CD8-positive, alpha-beta T cell (primary cell): ENCODE measurements at regions of chr2 and their contacts with region 1.

Region 1: DNA sequence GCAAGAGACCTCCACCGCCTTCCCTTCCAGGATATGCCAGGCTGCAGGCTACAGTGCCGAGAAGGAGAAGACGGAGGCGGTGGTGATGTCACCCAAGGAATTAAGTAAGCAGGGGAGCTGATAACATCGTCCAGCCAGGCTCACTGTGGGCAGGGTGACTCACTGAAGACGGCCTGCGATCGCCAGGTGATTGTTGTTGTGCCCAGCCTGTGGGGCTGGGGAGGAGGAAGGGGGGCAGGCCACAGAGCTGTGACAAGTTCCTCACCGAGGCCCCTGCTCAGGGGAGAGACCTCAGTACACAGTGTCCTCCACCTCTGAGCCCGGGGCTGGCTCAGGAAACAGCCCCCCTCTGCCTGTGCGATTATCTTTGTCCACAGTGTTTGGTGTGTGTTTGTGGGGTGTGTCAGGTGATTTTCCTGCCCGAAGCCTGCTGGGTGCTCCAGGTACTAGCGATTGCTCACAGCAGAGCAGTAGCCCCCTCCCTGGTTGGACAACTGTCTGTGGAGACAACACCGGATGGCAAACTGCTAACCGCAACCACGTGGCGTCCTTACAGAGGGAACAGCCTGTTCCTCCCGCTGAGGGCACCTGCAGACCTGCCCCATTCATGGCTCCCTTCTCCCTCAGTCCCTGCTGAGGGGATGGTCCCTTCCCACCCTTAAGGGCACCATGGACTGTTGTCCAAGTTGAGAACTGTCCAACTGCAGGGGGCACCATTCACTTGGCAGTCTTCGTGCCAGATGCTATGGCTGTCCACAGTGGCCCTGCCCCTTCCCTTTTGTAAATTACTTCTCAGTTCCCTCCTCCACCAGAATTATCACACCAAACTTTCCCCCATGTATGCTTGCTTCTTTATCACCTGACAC is 95.1 kb downstream of the ZFP36L2 start:
- DNase-seq: peak; percentile 64 to 95 (median 90)
- ATAC-seq: peak; percentile 51
- H3K4me3 ChIP-seq: peak overlapping the region; percentile 12 to 44
- H3K4me3 Mint-ChIP-seq: peak overlapping the region; percentile 60
- H3K27ac ChIP-seq: peak overlapping the region; percentile 88 to 90
- H3K27ac Mint-ChIP-seq: peak overlapping the region; percentile 100
- H3K4me1 ChIP-seq: peaks cover 97% of the 10 kb centered on the region
- H3K4me1 Mint-ChIP-seq: peaks cover 89% of the 10 kb centered on the region
- H3K27me3 ChIP-seq: no peaks in the 10 kb centered on the region
- H3K27me3 Mint-ChIP-seq: no peaks in the 10 kb centered on the region
- CTCF ChIP-seq: peak; percentile 21

Region 2: DNA sequence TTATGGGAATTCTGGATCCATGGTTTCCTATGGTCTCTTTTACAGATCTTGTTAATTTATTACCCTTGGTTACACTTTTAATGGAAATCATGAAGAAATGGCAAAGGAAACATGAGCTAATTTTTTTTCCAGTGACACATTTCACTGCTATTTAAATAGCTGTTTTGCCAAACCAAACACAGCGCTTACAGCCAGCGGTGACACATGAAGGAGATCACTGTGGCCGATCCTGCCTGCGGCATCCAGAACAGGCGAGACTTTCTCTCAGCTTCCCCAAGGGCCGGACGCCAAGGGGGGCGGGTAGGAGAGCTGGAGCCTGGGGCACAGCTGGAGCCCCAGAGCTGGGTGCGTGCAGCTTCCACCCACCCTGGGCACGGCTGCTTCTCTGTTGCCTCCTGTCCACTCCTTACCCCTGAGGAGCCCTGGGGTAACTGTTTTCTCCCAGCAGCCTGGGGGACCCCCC is 1164.8 kb before region 1 on chr2:
- CTCF ChIA-PET with region 1: no interaction called
- POLR2A ChIA-PET with region 1: no interaction called
- intact Hi-C with region 1: no loop called
- DNase-seq: no peak
- ATAC-seq: no peak
- H3K4me3 ChIP-seq: no peak overlapping the region
- H3K4me3 Mint-ChIP-seq: no peak overlapping the region
- H3K27ac ChIP-seq: no peak overlapping the region
- H3K27ac Mint-ChIP-seq: no peak overlapping the region
- H3K4me1 ChIP-seq: no peaks in the 10 kb centered on the region
- H3K4me1 Mint-ChIP-seq: no peaks in the 10 kb centered on the region
- H3K27me3 ChIP-seq: no peaks in the 10 kb centered on the region
- H3K27me3 Mint-ChIP-seq: no peaks in the 10 kb centered on the region
- CTCF ChIP-seq: no peak

Region 3: GRCh38 chr2:42828487-42829425 is 302.5 kb before region 1 on chr2:
- CTCF ChIA-PET with region 1: no interaction called
- POLR2A ChIA-PET with region 1: no interaction called
- intact Hi-C with region 1: loop called in 1 of 2 experiments (anchors 5 kb)
- DNase-seq: peak; percentile 34 to 84 (median 70)
- ATAC-seq: peak; percentile 97
- H3K4me3 ChIP-seq: no peak overlapping the region
- H3K4me3 Mint-ChIP-seq: no peak overlapping the region
- H3K27ac ChIP-seq: no peak overlapping the region
- H3K27ac Mint-ChIP-seq: no peak overlapping the region
- H3K4me1 ChIP-seq: peaks cover 9% of the 10 kb centered on the region
- H3K4me1 Mint-ChIP-seq: peaks cover 17% of the 10 kb centered on the region
- H3K27me3 ChIP-seq: peaks cover 0 to 2% of the 10 kb centered on the region in 2 experiments
- H3K27me3 Mint-ChIP-seq: peaks cover 1% of the 10 kb centered on the region
- CTCF ChIP-seq: peak; percentile 88

Region 4: DNA sequence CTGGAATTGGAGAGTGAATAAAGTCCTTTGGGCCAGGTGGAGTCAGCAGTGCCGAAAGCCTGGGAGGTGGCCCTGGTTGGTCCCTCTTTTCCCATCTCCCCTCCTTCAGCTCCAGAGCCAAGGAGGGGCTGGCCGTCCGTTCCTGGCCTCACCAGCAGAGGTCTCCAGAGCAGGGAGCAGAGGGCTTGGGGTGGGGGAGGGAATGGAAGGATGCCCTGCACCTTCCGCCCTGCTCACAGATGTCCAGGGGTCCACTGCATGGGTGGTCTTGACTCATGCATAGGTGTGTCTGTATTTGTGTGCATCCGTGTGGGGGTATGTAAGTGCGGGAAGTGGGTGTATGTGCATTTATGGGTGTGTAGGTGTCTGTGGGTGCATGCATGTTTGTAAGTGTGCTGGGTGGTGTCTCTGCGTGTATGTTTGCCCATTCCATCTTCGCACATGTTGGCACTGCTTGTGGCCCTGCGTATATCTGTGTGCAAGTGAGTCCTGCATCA is 106.7 kb before region 1 on chr2:
- CTCF ChIA-PET with region 1: interaction called, 8 read pairs
- POLR2A ChIA-PET with region 1: no interaction called
- intact Hi-C with region 1: loop called in 1 of 2 experiments (anchors 10 kb)
- DNase-seq: peak in 8 of 9 experiments; percentile 6 to 67 (median 38)
- ATAC-seq: peak; percentile 55
- H3K4me3 ChIP-seq: no peak overlapping the region
- H3K4me3 Mint-ChIP-seq: no peak overlapping the region
- H3K27ac ChIP-seq: no peak overlapping the region
- H3K27ac Mint-ChIP-seq: no peak overlapping the region
- H3K4me1 ChIP-seq: peaks cover 13% of the 10 kb centered on the region
- H3K4me1 Mint-ChIP-seq: peaks cover 24% of the 10 kb centered on the region
- H3K27me3 ChIP-seq: no peaks in the 10 kb centered on the region
- H3K27me3 Mint-ChIP-seq: no peaks in the 10 kb centered on the region
- CTCF ChIP-seq: no peak

Region 5: DNA sequence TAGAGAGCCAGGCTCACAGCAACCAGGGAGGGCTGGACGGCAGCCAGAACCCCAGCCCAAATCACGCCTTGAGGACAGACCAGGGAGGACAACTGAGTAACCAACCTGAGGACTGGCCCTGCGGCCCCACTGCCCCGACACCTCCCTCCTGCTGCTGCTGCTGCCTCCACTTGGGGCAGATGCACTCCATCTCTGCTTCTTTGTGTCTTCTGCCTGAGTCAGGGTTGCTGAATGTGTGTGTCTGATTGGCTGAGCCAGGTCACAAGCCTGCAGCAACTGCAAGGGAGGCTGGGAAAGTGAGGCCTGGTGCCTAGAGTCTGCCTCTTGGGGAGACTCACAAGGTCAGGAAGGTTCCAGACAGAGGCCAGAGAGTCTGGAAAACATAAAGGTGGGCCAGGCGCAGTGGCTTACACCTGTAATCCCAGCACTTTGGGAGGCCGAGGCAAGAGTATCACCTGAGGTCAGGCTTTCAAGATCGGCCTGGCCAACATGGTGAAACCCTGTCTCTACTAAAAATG is 11.7 kb after region 1 on chr2:
- CTCF ChIA-PET with region 1: interaction called, 16 read pairs
- POLR2A ChIA-PET with region 1: interaction called, 7 read pairs
- intact Hi-C with region 1: loop called in 1 of 2 experiments (anchors 2 kb)
- DNase-seq: peak in 7 of 9 experiments; percentile 24 to 74 (median 51)
- ATAC-seq: peak; percentile 41
- H3K4me3 ChIP-seq: peak overlapping the region; percentile 37 to 53
- H3K4me3 Mint-ChIP-seq: peak overlapping the region; percentile 66
- H3K27ac ChIP-seq: peak overlapping the region; percentile 40 to 49
- H3K27ac Mint-ChIP-seq: peak overlapping the region; percentile 92
- H3K4me1 ChIP-seq: peaks cover 76% of the 10 kb centered on the region
- H3K4me1 Mint-ChIP-seq: peaks cover 70% of the 10 kb centered on the region
- H3K27me3 ChIP-seq: no peaks in the 10 kb centered on the region
- H3K27me3 Mint-ChIP-seq: no peaks in the 10 kb centered on the region
- CTCF ChIP-seq: no peak

Region 6: DNA sequence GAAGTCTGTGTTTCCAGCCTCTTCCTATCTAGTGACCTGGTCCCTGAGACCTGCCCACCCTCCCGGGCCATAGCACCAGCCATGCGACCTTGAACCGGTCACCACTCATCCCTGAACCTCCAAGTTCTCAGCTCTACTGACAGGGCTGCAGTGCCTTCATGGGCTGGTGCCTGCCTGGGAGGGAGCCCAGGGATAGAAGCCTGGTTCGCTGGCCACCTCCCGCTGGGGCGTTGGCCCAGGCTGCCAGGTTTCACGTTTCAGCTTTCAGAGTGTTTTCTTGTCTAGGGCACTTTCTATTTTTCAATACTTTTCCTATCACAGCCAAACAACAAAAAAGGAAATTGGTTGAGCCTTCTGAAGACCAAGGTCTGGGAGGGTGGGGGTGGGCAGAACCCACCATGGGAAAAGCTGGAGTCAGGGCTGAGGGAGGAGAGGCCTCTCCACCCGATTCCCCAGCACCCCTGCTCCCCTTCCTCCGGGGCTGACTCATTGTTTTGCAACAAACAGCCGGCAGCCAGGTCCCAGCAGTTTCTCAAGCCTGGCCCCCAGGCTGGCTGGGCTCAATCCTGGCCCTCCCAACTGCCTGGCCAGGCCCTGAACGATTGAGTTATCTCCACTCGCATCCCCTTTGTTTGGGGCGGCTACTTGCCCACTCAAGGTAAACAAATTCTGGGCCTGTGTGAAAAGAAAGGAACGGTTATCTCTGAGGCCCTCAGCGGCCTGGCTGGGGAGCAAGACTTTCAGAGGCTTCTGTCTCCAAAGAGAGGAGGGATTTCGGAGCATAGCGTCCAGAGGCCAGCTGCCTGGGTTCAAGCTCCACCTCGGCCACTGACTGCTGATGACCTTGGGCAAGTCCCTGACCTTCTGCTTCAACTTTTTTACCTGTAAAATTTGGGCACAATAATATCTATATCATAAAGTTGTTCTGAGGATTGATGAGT is 47.6 kb after region 1 on chr2:
- CTCF ChIA-PET with region 1: interaction called, 13 read pairs
- POLR2A ChIA-PET with region 1: interaction called, 245 read pairs
- intact Hi-C with region 1: loop called (anchors 1 to 2 kb)
- DNase-seq: peak in 2 of 9 experiments; percentile 45 to 63
- ATAC-seq: no peak
- H3K4me3 ChIP-seq: no peak overlapping the region
- H3K4me3 Mint-ChIP-seq: peak overlapping the region; percentile 45
- H3K27ac ChIP-seq: peak overlapping the region in 1 of 2 experiments; percentile 17
- H3K27ac Mint-ChIP-seq: peak overlapping the region; percentile 90
- H3K4me1 ChIP-seq: peaks cover 57% of the 10 kb centered on the region
- H3K4me1 Mint-ChIP-seq: peaks cover 66% of the 10 kb centered on the region
- H3K27me3 ChIP-seq: no peaks in the 10 kb centered on the region
- H3K27me3 Mint-ChIP-seq: no peaks in the 10 kb centered on the region
- CTCF ChIP-seq: no peak

Region 7: GRCh38 chr2:43333656-43334144 is 202.4 kb after region 1 on chr2:
- CTCF ChIA-PET with region 1: no interaction called
- POLR2A ChIA-PET with region 1: no interaction called
- intact Hi-C with region 1: no loop called
- DNase-seq: no peak
- ATAC-seq: no peak
- H3K4me3 ChIP-seq: no peak overlapping the region
- H3K4me3 Mint-ChIP-seq: no peak overlapping the region
- H3K27ac ChIP-seq: no peak overlapping the region
- H3K27ac Mint-ChIP-seq: no peak overlapping the region
- H3K4me1 ChIP-seq: no peaks in the 10 kb centered on the region
- H3K4me1 Mint-ChIP-seq: peaks cover 2% of the 10 kb centered on the region
- H3K27me3 ChIP-seq: no peaks in the 10 kb centered on the region
- H3K27me3 Mint-ChIP-seq: no peaks in the 10 kb centered on the region
- CTCF ChIP-seq: no peak

Region 8: DNA sequence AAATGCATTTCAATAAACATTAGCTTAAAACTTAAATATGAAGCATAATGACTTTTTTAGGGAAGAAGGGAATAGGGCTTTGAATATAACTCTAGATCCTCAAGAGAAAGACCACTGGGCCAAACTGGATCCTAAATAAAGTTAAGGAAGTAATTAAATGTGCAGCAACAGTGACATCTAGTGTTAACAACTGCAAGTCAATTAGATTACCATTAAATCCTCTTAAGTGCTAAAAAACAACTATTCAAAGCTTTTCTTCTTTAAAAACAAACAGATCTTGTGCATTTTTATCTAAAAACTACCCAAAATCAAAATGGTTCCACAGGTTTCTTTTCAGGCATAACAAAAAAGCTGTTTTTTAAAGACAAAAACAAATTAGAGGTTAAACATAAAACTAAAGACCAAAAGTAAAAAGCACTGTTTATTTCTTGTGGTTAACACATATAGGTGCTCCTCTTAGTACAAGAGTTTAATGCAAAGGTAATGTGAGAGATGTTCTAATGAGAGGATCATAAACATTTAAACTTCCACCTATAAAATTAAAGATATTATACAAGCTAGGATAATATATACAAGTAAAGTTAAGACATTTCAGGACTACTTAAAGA is 353.2 kb after region 1 on chr2:
- CTCF ChIA-PET with region 1: interaction called, 37 read pairs
- POLR2A ChIA-PET with region 1: no interaction called
- intact Hi-C with region 1: loop called (anchors 1 kb)
- DNase-seq: peak in 2 of 9 experiments; percentile 73 to 82
- ATAC-seq: peak; percentile 34
- H3K4me3 ChIP-seq: no peak overlapping the region
- H3K4me3 Mint-ChIP-seq: no peak overlapping the region
- H3K27ac ChIP-seq: no peak overlapping the region
- H3K27ac Mint-ChIP-seq: no peak overlapping the region
- H3K4me1 ChIP-seq: no peaks in the 10 kb centered on the region
- H3K4me1 Mint-ChIP-seq: peaks cover 11% of the 10 kb centered on the region
- H3K27me3 ChIP-seq: no peaks in the 10 kb centered on the region
- H3K27me3 Mint-ChIP-seq: no peaks in the 10 kb centered on the region
- CTCF ChIP-seq: peak; percentile 84